Heart right ventricle (tissue), 16 donors: ENCODE measurements at regions of chr18 and their contacts with region 1.

Region 1: DNA sequence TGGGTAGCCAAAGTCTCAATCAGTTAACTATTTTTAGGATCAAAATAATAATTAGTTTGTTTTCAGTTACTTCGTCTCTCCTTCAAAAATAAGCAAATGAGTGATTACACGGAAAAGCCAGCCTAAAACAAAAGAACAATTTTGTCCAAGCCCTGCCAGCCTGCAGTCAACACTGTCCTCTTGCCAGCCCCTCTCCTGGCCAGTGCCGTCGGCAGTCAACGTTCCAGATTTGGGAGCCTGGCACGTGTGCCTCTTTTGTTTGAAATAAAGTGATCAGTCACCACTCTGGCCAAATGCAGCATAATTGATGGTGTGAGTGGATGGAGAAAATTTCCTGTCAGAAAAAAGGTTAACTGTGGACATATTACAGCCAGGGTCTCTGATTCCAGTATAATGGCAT is 260.6 kb upstream of the SKOR2 start:
- DNase-seq: peak in 1 of 2 donors; percentile 13
- ATAC-seq: no peak
- H3K4me3 ChIP-seq: no peak overlapping the region
- H3K27ac ChIP-seq: no peak overlapping the region
- H3K4me1 ChIP-seq: peaks cover 0 to 4% (median 0%) of the 10 kb centered on the region in 9 donors
- H3K27me3 ChIP-seq: peaks cover 0 to 14% (median 0%) of the 10 kb centered on the region in 7 donors
- CTCF ChIP-seq: no peak

Region 2: DNA sequence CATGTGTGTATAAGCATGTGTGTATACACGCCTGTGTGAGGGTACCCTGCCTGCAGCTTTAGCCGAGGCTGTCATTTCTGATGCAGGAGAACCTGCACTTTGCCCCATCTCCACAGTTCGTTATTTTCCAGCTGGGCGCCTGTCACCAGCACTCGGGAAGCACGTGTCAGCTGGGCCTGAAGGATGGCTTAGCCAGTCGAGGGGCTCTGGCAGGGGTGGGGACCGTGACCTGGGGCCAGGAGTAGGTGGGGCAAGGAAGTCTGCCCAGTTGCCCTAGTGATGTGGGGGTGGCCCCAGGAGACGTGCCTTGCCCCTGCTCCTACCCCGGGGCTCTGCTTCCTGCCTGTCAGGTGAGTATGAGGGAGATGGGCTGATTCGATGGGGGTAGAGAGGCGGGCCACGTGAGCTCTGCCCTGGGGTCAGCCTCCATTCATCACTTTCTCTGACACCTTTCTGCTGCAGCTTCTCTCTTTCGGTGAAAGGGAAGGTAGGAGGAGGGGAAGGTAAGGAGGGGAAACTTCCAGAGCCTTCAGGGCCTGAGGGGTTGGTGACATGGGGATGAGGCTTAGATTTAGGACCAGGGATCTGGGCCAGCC is 130.0 kb before region 1 on chr18:
- intact Hi-C with region 1: loop called in 1 of 10 experiments (anchors 10 kb)
- DNase-seq: no peak
- ATAC-seq: no peak
- H3K4me3 ChIP-seq: no peak overlapping the region
- H3K27ac ChIP-seq: no peak overlapping the region
- H3K4me1 ChIP-seq: no peaks in the 10 kb centered on the region
- H3K27me3 ChIP-seq: peaks cover 0 to 32% (median 7%) of the 10 kb centered on the region in 7 donors
- CTCF ChIP-seq: no peak

Region 3: GRCh38 chr18:47453038-47453700 is 58.9 kb before region 1 on chr18:
- intact Hi-C with region 1: no loop called
- DNase-seq: no peak
- ATAC-seq: no peak
- H3K4me3 ChIP-seq: no peak overlapping the region
- H3K27ac ChIP-seq: no peak overlapping the region
- H3K4me1 ChIP-seq: no peaks in the 10 kb centered on the region
- H3K27me3 ChIP-seq: peaks cover 0 to 15% (median 0%) of the 10 kb centered on the region in 7 donors
- CTCF ChIP-seq: no peak